GM12878 (cell line): ENCODE measurements at regions of chr1 and their contacts with region 1.

Region 1: DNA sequence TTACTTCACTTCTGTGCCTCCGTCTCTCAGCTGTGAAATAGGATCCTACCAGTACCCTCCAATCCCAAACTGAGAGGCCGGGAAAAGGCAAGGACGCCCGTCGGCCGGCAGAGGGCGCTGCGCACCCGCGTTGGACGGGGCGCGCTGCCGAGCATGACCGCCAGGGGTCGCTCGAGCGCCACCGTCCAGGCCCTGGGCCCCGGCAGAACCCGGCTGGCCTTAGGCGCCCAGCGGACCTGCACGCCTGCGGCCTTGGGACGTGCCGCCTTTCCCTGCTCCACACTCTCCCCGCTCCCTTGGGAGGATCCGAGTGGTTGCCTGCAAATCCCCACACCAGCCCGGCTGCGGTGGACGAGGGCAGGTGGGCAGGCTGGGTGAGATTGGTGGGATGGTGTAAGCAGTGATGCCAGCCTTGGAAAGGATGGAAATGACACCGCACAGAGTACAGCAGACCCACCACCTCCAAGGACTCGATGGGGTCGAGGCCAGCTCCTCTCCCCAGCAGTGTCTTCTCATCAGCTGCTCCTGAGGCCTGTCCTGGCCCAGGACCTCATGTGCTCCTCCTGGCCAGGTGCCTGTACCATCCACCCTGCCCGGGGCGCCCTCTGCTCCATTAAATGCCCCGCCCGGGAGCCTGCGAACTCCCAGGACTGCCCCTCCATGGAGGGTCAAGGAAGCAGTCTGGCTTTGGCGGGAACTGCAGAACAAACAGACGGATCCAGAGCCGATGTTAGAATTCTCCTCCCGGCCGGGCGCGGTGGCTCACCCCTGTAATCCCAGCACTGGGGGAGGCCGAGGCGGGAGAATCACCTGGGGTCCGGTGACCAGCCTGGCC is 47.4 kb upstream of the LBR start:
- DNase-seq: no peak
- ATAC-seq: peak; percentile 86
- H3K4me3 ChIP-seq: no peak overlapping the region
- H3K27ac ChIP-seq: no peak overlapping the region
- H3K4me1 ChIP-seq: peaks cover 21% of the 10 kb centered on the region
- H3K27me3 ChIP-seq: no peaks in the 10 kb centered on the region
- CTCF ChIP-seq: peak; percentile 99 to 100 (median 100); a peak in 5 of 6 replicates
- EP300 ChIP-seq: no peak
- POLR2A ChIP-seq: no peak
- RAD21 ChIP-seq: peak; percentile 99

Region 2: GRCh38 chr1:225406976-225407725 is 68.1 kb before region 1 on chr1:
- CTCF ChIA-PET with region 1: no interaction called
- POLR2A ChIA-PET with region 1: no interaction called
- RAD21 ChIA-PET with region 1: no interaction called
- SMC1A ChIA-PET with region 1: no interaction called
- in situ Hi-C with region 1: no loop called
- intact Hi-C with region 1: no loop called
- DNase-seq: no peak
- ATAC-seq: no peak
- H3K4me3 ChIP-seq: no peak overlapping the region
- H3K27ac ChIP-seq: no peak overlapping the region
- H3K4me1 ChIP-seq: no peaks in the 10 kb centered on the region
- H3K27me3 ChIP-seq: no peaks in the 10 kb centered on the region
- CTCF ChIP-seq: no peak
- EP300 ChIP-seq: no peak
- POLR2A ChIP-seq: no peak
- RAD21 ChIP-seq: no peak

Region 3: GRCh38 chr1:225418059-225418458 is 57.1 kb before region 1 on chr1:
- CTCF ChIA-PET with region 1: no interaction called
- POLR2A ChIA-PET with region 1: no interaction called
- RAD21 ChIA-PET with region 1: no interaction called
- SMC1A ChIA-PET with region 1: no interaction called
- in situ Hi-C with region 1: no loop called
- intact Hi-C with region 1: no loop called
- DNase-seq: no peak
- ATAC-seq: no peak
- H3K4me3 ChIP-seq: no peak overlapping the region
- H3K27ac ChIP-seq: no peak overlapping the region
- H3K4me1 ChIP-seq: 0 out of 2 replicates have a peak, but pooled peaks cover 3% of the 10 kb centered on the region
- H3K27me3 ChIP-seq: no peaks in the 10 kb centered on the region
- CTCF ChIP-seq: no peak
- EP300 ChIP-seq: no peak
- POLR2A ChIP-seq: no peak
- RAD21 ChIP-seq: no peak

Region 4: DNA sequence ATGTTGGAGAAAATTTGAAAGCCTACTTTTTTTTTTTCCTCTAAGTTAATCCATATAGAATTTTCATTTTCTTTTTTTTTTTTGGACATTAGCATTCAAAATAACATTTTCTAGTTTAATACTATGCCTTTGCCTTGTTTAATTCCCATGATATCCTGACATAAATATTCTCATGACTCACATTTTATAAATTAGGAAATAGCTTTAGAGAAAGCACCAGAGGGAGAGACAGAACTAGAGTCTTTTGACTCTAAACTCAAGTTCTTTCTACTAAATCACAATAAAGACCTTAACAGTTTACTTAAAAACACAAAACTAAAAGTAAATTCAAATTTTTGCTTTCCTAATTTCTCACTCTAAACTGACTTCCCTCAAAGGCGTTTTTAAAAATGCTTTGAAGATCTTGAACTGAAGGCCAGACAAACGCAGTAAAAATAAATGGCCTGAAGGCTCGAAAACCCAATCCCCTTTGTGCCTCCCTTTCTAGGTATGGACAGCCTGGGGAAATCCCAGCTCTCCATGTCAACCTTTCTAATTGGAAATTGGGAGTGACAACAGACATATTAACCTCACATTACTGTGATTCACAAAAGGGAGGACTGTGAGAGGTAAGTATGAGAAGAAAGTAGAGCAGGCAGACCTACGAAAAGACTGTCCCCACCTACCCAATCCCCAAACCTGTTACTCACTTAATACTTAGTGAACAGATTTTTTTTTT is 73.1 kb after region 1 on chr1:
- CTCF ChIA-PET with region 1: interaction called, 4 read pairs
- POLR2A ChIA-PET with region 1: no interaction called
- RAD21 ChIA-PET with region 1: no interaction called
- SMC1A ChIA-PET with region 1: no interaction called
- in situ Hi-C with region 1: no loop called
- intact Hi-C with region 1: loop called (anchors 5 kb)
- DNase-seq: no peak
- ATAC-seq: no peak
- H3K4me3 ChIP-seq: no peak overlapping the region
- H3K27ac ChIP-seq: no peak overlapping the region
- H3K4me1 ChIP-seq: no peaks in the 10 kb centered on the region
- H3K27me3 ChIP-seq: no peaks in the 10 kb centered on the region
- CTCF ChIP-seq: no peak
- EP300 ChIP-seq: no peak
- POLR2A ChIP-seq: no peak
- RAD21 ChIP-seq: no peak

Region 5: DNA sequence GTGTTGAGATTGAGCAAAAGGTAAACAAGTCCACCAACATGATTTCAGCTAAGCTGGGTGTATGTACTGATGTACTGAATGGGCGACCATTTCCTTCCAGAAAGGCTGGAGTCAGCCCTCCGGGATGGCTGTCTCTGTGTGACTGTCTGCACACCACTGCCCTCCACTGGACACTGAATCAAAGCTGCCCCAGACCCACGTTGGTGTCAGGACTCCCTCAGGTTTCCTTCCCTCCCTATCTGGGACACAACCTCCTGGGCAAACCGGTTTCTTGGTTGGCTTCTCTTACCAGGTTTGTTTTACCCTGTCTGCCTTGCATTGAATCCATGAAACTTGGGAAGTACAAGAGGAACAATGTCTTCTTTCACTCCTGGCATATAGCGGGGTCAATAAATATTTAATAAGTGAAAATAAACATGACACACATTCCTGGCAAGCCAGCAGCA is 297.1 kb after region 1 on chr1:
- CTCF ChIA-PET with region 1: interaction called, 9 read pairs
- POLR2A ChIA-PET with region 1: no interaction called
- RAD21 ChIA-PET with region 1: interaction called, 3 read pairs
- SMC1A ChIA-PET with region 1: interaction called, 4 read pairs
- in situ Hi-C with region 1: loop called (anchors 10 kb)
- intact Hi-C with region 1: loop called (anchors 1 kb)
- DNase-seq: no peak
- ATAC-seq: peak; percentile 89
- H3K4me3 ChIP-seq: no peak overlapping the region
- H3K27ac ChIP-seq: no peak overlapping the region
- H3K4me1 ChIP-seq: no peaks in the 10 kb centered on the region
- H3K27me3 ChIP-seq: no peaks in the 10 kb centered on the region
- CTCF ChIP-seq: peak; percentile 57 to 63 (median 62); a peak in 5 of 6 replicates
- EP300 ChIP-seq: no peak
- POLR2A ChIP-seq: no peak
- RAD21 ChIP-seq: peak; percentile 62

Region 6: GRCh38 chr1:225845571-225846259 is 370.5 kb after region 1 on chr1:
- CTCF ChIA-PET with region 1: interaction called, 3 read pairs
- POLR2A ChIA-PET with region 1: no interaction called
- RAD21 ChIA-PET with region 1: no interaction called
- SMC1A ChIA-PET with region 1: no interaction called
- in situ Hi-C with region 1: no loop called
- intact Hi-C with region 1: loop called (anchors 10 kb)
- DNase-seq: no peak
- ATAC-seq: peak; percentile 36
- H3K4me3 ChIP-seq: no peak overlapping the region
- H3K27ac ChIP-seq: no peak overlapping the region
- H3K4me1 ChIP-seq: peaks cover 34% of the 10 kb centered on the region
- H3K27me3 ChIP-seq: no peaks in the 10 kb centered on the region
- CTCF ChIP-seq: peak; percentile 43 to 59 (median 47)
- EP300 ChIP-seq: no peak
- POLR2A ChIP-seq: peak; percentile 27
- RAD21 ChIP-seq: peak; percentile 68

Region 7: DNA sequence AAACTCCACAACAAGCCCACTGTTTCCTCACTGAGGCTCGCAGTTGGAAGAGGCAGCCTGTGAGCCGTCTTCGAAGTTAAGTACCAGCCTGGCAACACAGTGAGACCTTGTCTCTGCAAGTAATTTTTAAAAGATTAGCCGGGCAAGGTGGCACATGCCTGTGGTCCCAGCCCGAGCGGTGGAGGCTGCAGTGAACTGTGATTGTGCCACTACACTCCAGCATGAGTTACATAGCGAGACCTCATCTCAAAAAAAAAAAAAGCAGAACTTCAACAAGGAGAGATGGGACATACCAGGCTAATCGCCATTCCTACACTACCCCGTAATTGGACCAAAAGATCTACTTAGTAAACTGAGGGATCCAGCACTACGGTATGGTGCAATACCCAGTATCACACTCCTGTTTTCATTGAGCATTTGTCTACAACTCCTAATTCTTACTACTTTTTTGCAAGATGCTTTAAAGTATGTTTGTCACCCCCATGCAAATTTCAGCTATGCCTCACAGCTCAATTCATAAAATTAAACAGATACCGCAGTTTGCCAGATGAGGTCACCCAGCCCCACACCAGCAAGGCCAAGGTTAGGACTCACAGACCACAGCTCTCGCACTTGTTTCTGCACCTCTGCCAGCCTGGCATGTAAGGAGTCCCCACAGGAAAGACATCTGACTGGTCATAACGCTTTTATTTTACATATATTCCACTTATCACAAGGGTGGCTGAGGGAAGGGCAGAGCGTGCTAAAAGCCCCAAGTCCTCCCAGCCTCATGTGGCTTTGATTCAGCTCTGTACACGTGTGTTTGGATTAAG is 502.9 kb after region 1 on chr1:
- CTCF ChIA-PET with region 1: interaction called, 32 read pairs
- POLR2A ChIA-PET with region 1: no interaction called
- RAD21 ChIA-PET with region 1: interaction called, 4 read pairs
- SMC1A ChIA-PET with region 1: interaction called, 10 read pairs
- in situ Hi-C with region 1: loop called (anchors 5 kb)
- intact Hi-C with region 1: loop called (anchors 1 kb)
- DNase-seq: peak; percentile 45
- ATAC-seq: peak; percentile 85
- H3K4me3 ChIP-seq: no peak overlapping the region
- H3K27ac ChIP-seq: no peak overlapping the region
- H3K4me1 ChIP-seq: 0 out of 2 replicates have a peak, but pooled peaks cover 5% of the 10 kb centered on the region
- H3K27me3 ChIP-seq: no peaks in the 10 kb centered on the region
- CTCF ChIP-seq: peak; percentile 9 to 54 (median 11); a peak in 4 of 6 replicates
- EP300 ChIP-seq: no peak
- POLR2A ChIP-seq: no peak
- RAD21 ChIP-seq: peak; percentile 51